Mammary epithelial cell (primary cell): ENCODE measurements at regions of chr2 and their contacts with region 1.

Region 1: GRCh38 chr2:171922230-171923022 is at the start of gene HAT1:
- DNase-seq: peak; percentile 96
- H3K4me3 ChIP-seq: peak within 1 kb of the TSS; percentile 72 to 77 (median 73)
- H3K27ac ChIP-seq: peak within 1 kb of the TSS; percentile 88
- H3K4me1 ChIP-seq: no peaks in the 10 kb centered on the region
- H3K27me3 ChIP-seq: no peaks in the 10 kb centered on the region
- CTCF ChIP-seq: no peak
- total RNA-seq, gene HAT1: 30.8 to 56.3 TPM

Region 2: GRCh38 chr2:171999604-172000469 is 77.4 kb after region 1 on chr2 and contains the start of gene METAP1D:
- CTCF ChIA-PET with region 1: no interaction called
- dilution Hi-C with region 1: no loop called
- in situ Hi-C with region 1: no loop called
- intact Hi-C with region 1: loop called (anchors 1 kb)
- DNase-seq: peak; percentile 87
- H3K4me3 ChIP-seq: peak within 1 kb of the TSS; percentile 67 to 91 (median 86)
- H3K27ac ChIP-seq: peak within 1 kb of the TSS; percentile 89
- H3K4me1 ChIP-seq: peaks cover 17% of the 10 kb centered on the region
- H3K27me3 ChIP-seq: no peaks in the 10 kb centered on the region
- CTCF ChIP-seq: no peak
- total RNA-seq, gene METAP1D: 3.3 to 4.7 TPM